Common myeloid progenitor, CD34-positive (primary cell): ENCODE measurements at regions of chr14 and their contacts with region 1.

Region 1: GRCh38 chr14:76968621-76969063 is 59.9 kb downstream of the IRF2BPL start:
- DNase-seq: no peak
- H3K4me3 ChIP-seq: no peak overlapping the region
- H3K27ac ChIP-seq: no peak overlapping the region
- H3K4me1 ChIP-seq: peaks cover 0 to 13% (median 0%) of the 10 kb centered on the region in 4 experiments
- H3K27me3 ChIP-seq: no peaks in the 10 kb centered on the region

Region 2: GRCh38 chr14:76985540-76986230 is 17.0 kb after region 1 on chr14:
- CTCF ChIA-PET with region 1: interaction called, 16 read pairs
- POLR2A ChIA-PET with region 1: no interaction called
- DNase-seq: no peak
- H3K4me3 ChIP-seq: no peak overlapping the region
- H3K27ac ChIP-seq: no peak overlapping the region
- H3K4me1 ChIP-seq: peaks cover 0 to 37% (median 25%) of the 10 kb centered on the region in 4 experiments
- H3K27me3 ChIP-seq: no peaks in the 10 kb centered on the region